A549 (cell line): ENCODE measurements at regions of chr1 and their contacts with region 1.

Region 1: GRCh38 chr1:204806943-204807687 is 63.5 kb upstream of the NFASC start:
- DNase-seq: peak; percentile 82 to 98
- ATAC-seq: peak; percentile 92 to 97
- H3K4me3 ChIP-seq: peak overlapping the region; percentile 44
- H3K27ac ChIP-seq: peak overlapping the region; percentile 65 to 83
- H3K4me1 ChIP-seq: no peaks in the 10 kb centered on the region
- CTCF ChIP-seq: peak; percentile 100
- EP300 ChIP-seq: no peak
- POLR2A ChIP-seq: no peak
- RAD21 ChIP-seq: peak; percentile 89 to 99

Region 2: DNA sequence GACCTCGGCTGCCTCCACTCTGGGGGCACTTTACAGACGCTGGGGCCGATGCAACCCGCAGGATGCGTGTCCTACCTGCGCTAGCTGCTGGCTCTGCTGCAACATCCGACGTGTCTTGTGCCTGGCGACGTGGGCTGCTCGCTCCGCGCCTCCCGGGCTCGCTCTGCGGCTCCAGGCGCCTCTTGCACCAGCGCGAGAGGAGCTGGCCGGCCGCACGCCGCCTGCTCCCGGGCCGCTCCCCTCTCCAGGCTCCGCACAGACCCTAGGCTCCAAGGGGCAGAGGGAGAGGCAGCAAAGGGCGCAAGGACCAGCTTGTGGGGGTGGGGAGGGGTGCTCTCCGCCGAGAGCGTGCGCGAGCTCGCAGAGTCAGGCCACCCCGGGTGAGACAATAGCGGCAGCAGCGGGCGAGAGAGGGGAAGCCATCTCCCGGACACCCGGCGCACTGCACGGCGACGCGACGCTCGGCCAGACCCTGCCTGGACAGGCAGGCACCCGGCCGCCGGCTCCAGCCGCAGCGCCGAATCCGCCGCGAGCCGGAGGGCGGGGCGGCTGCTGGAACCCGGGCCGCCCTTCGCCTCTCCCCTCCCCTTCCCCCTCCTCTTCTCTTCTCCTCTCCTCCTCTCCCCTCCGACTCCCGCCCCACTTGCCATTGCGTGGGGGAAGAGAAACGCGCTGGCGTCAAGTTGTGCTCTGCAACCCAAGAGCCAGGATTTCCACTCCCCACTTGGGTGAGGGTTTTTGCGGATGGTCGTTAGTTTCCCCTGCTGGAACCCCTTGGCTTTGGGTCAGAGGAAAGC is 312.6 kb before region 1 on chr1 and contains the start of gene PIK3C2B:
- CTCF ChIA-PET with region 1: interaction called, 12 read pairs
- POLR2A ChIA-PET with region 1: no interaction called
- DNase-seq: peak; percentile 85 to 97
- ATAC-seq: peak; percentile 95 to 97
- H3K4me3 ChIP-seq: peak within 1 kb of the TSS; percentile 70
- H3K27ac ChIP-seq: peak within 1 kb of the TSS; percentile 87 to 94
- H3K4me1 ChIP-seq: peaks cover 24% of the 10 kb centered on the region; the same call in 2 of the 3 replicates
- CTCF ChIP-seq: peak; percentile 20; the same call in 2 of the 3 replicates
- EP300 ChIP-seq: no peak
- POLR2A ChIP-seq: peak; percentile 93
- RAD21 ChIP-seq: peak; percentile 26 to 55; a peak in 3 of 5 replicates
- polyA plus RNA-seq, gene PIK3C2B: 9.2 and 13.0 TPM in 2 replicates

Region 3: GRCh38 chr1:204565617-204566582 is 241.2 kb before region 1 on chr1:
- CTCF ChIA-PET with region 1: interaction called, 591 read pairs
- POLR2A ChIA-PET with region 1: interaction called, 17 read pairs
- DNase-seq: peak; percentile 82 to 89
- ATAC-seq: peak; percentile 79 to 93
- H3K4me3 ChIP-seq: no peak overlapping the region
- H3K27ac ChIP-seq: no peak overlapping the region
- H3K4me1 ChIP-seq: peaks cover 9% of the 10 kb centered on the region; the same call in 2 of the 3 replicates
- CTCF ChIP-seq: peak; percentile 87
- EP300 ChIP-seq: no peak
- POLR2A ChIP-seq: no peak
- RAD21 ChIP-seq: peak; percentile 93 to 95

Region 4: DNA sequence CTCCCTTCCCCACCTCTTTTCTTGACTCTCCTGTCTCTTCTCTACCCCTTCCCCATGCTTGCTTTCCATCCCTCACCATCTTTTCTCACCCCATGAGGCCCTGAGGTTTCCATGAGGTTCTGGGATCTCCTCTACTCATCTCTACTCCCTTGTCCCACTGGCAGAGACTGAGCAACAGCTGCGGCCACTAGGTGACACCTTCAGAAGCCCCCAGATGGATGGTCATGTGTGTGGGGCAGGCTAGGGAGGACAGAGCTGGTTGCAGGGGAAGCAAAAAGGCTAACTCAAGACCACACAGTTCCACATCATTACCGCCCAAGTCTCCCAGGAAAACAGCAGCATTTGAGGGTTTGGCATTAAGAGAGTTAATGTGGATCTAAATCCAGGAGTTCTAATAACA is 166.5 kb before region 1 on chr1:
- CTCF ChIA-PET with region 1: interaction called, 32 read pairs
- POLR2A ChIA-PET with region 1: no interaction called
- DNase-seq: no peak
- ATAC-seq: no peak
- H3K4me3 ChIP-seq: no peak overlapping the region
- H3K27ac ChIP-seq: no peak overlapping the region
- H3K4me1 ChIP-seq: no peaks in the 10 kb centered on the region
- CTCF ChIP-seq: no peak
- EP300 ChIP-seq: no peak
- POLR2A ChIP-seq: no peak
- RAD21 ChIP-seq: no peak

Region 5: DNA sequence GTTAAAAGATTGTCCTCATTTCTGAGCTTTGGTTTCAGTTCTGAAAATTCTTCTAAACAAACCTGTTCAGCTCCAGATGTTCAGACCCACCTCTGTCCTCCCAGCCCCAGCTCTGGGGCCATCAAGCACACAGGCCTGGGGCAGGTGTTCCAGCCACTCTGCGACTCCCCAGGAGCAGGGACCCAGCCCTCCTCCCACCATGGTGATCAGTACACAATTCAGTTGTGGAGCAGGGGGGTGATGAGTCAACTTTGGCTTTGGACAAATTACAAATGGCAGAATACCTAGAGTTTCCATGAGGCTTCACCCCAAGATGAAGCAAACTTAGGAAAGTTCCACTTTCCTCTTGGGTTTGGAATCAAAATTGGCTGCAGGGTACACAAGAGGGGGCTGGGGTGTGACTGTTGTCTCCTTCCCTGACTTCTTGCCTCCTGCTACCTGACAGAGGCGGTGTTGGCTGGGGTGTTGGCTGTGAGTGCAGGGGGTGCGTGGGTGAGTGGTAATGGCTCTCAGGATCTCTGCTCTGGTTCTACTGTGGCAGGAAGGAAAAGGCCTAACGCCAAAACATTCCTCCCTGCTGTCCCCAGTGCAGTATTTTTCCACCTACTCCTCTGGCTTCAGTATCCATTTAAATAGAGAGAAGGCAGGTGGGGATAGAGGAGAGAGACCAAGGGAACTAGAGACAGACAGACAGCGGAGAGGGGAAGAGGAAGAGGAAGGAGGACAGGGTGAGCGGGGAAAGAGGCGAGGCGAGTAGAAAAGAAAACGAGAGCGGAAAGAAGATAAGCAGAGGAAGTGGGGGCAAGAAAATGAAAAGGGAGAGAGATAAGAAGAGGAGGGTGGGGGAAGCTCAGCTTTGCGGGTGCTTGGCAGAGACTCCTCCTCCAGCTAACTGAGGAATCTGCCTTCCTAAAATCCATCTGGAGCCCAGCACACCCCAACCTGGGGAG is 101.0 kb before region 1 on chr1:
- CTCF ChIA-PET with region 1: interaction called, 14 read pairs
- POLR2A ChIA-PET with region 1: no interaction called
- DNase-seq: no peak
- ATAC-seq: no peak
- H3K4me3 ChIP-seq: no peak overlapping the region
- H3K27ac ChIP-seq: peak overlapping the region in 1 of 2 experiments; percentile 9; a peak in 1 of 6 replicates
- H3K4me1 ChIP-seq: peaks cover 21% of the 10 kb centered on the region
- CTCF ChIP-seq: no peak
- EP300 ChIP-seq: no peak
- POLR2A ChIP-seq: no peak
- RAD21 ChIP-seq: no peak

Region 6: DNA sequence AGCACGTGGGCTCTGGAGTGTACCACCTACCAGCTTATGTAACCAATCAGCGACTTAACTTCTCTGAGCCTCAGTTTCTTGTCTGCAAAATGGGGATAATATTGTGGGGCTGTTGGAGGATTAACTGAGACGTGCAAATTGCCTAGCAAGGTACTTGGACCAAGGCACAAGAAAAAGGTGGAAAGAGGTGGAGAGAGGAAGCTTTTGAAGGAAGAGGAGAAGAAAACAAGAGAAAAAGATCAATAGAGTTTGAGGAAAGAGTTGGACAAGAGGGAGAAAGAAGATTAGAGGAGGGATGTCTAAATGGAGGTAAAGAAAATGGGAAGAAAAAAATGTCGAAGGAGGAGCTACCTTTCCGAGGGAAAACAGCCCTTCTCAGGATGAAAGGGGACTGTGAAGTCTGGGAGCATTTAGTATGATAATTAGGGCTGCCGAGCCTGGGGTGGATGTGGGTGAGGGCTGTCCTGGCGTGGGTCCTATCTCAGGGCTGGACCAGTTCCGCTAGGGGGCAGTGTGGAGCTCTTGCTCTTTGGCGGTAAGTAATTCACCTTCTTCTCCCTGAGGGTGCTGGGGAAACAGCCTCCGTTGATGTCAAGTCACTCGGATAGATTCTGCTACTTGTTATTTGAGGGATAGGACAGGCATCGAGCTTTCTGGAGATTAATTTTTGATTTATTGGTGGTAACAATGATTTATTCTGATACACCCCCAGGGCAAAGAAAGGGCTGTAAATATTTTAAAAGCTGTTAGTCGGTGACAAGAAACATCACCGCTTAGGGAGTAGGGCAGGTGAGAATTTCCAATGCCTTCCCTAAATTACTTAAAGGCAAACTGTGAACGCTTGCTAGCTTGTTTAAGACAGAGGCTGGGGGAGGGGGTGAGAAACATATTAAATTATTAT is 15.4 kb before region 1 on chr1:
- CTCF ChIA-PET with region 1: interaction called, 199 read pairs
- POLR2A ChIA-PET with region 1: no interaction called
- DNase-seq: peak; percentile 75 to 79
- ATAC-seq: peak; percentile 91 to 97
- H3K4me3 ChIP-seq: no peak overlapping the region
- H3K27ac ChIP-seq: no peak overlapping the region
- H3K4me1 ChIP-seq: no peaks in the 10 kb centered on the region
- CTCF ChIP-seq: peak; percentile 84
- EP300 ChIP-seq: no peak
- POLR2A ChIP-seq: no peak
- RAD21 ChIP-seq: peak; percentile 24 to 33; a peak in 2 of 5 replicates

Region 7: GRCh38 chr1:204968951-204969350 is 161.8 kb after region 1 on chr1:
- CTCF ChIA-PET with region 1: interaction called, 22 read pairs
- POLR2A ChIA-PET with region 1: no interaction called
- DNase-seq: no peak
- ATAC-seq: no peak
- H3K4me3 ChIP-seq: no peak overlapping the region
- H3K27ac ChIP-seq: no peak overlapping the region
- H3K4me1 ChIP-seq: peaks cover 12% of the 10 kb centered on the region
- CTCF ChIP-seq: no peak
- EP300 ChIP-seq: no peak
- POLR2A ChIP-seq: no peak
- RAD21 ChIP-seq: no peak

Region 8: DNA sequence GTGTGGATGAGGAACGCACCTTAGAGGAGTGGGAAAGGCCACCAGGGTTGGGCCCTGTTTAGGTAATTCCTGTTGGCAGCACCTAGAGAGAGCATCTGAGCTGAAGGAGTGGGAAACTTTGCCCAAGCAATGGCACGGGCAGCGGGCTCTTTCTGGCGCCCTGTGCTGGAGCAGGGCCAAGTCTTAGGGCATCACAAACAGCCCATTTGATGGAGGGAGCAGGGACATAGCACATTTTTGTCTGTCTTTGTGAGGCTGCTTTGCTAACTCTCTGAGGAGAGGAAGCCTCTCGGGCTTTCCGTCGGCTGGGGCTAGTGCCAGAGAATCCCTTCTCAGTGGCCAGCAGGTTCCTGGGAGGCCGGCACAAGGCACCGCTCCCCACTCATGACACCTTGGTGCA is 213.4 kb after region 1 on chr1:
- CTCF ChIA-PET with region 1: no interaction called
- POLR2A ChIA-PET with region 1: no interaction called
- DNase-seq: no peak
- ATAC-seq: no peak
- H3K4me3 ChIP-seq: no peak overlapping the region
- H3K27ac ChIP-seq: no peak overlapping the region
- H3K4me1 ChIP-seq: no peaks in the 10 kb centered on the region
- CTCF ChIP-seq: no peak
- EP300 ChIP-seq: no peak
- POLR2A ChIP-seq: no peak
- RAD21 ChIP-seq: no peak